ENCODE measurements at regions of chr11 and their contacts with region 1.

Region 1: GRCh38 chr11:59135648-59136461 is 6.8 kb upstream of the FAM111A start:
- DNase-seq: peak; percentile 92
- ATAC-seq: peak; percentile 99
- H3K4me3 Mint-ChIP-seq: peak overlapping the region; percentile 54
- H3K27ac Mint-ChIP-seq: peak overlapping the region; percentile 84
- H3K4me1 Mint-ChIP-seq: peaks cover 24% of the 10 kb centered on the region
- H3K27me3 Mint-ChIP-seq: no peaks in the 10 kb centered on the region

Region 2: DNA sequence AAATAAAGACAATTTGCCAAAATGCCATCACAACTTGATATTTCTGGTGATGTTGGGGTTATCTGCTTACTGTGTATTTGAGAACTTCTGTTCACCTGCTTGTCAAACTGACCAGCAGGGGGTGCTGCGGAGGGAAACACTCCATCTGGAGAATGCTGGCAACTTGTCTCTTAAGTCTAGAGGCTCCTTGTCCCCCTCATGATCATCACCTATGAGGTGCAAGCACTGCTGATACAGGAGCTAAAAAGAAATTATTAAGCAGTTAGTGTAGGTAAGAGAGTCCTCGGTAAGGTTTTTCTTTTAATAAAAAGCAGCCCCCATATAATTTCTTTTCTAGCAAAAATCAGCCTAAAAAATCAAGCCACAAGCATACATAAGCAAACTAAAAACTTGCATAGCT is 82.5 kb before region 1 on chr11:
- CTCF ChIA-PET with region 1: interaction called, 26 read pairs
- POLR2A ChIA-PET with region 1: interaction called, 3 read pairs
- DNase-seq: peak; percentile 85
- ATAC-seq: peak; percentile 76
- H3K4me3 Mint-ChIP-seq: no peak overlapping the region
- H3K27ac Mint-ChIP-seq: no peak overlapping the region
- H3K4me1 Mint-ChIP-seq: peaks cover 11% of the 10 kb centered on the region
- H3K27me3 Mint-ChIP-seq: peaks cover 14% of the 10 kb centered on the region

Region 3: DNA sequence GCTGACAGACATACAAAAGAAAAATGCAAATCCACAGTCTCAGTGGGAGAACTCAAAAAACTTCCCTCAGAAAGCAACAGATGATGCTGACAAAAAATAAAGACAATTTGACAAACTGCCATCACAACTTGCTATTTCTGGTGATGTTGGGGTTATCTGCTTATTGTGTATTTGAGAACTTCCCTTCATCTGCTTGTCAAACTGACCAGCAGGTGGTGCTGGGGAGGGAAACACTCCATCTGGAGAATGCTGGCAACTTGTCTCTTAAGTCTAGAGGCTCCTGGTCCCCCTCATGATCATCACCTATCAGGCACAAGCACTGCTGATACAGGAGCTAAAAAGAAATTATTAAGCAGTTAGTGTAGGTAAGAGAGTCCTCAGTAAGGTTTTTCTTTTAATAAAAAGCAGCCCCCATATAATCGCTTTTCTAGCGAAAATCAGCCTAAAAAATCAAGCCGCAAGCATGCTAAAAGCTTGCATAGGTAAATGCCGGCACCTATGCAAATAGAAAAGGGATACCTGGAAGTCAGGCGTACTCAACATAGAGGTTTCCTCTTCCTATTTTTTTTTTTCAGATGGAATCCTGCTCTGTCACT is 38.6 kb before region 1 on chr11:
- CTCF ChIA-PET with region 1: interaction called, 47 read pairs
- POLR2A ChIA-PET with region 1: no interaction called
- DNase-seq: peak; percentile 77
- ATAC-seq: peak; percentile 79
- H3K4me3 Mint-ChIP-seq: no peak overlapping the region
- H3K27ac Mint-ChIP-seq: no peak overlapping the region
- H3K4me1 Mint-ChIP-seq: peaks cover 15% of the 10 kb centered on the region
- H3K27me3 Mint-ChIP-seq: peaks cover 30% of the 10 kb centered on the region

Region 4: DNA sequence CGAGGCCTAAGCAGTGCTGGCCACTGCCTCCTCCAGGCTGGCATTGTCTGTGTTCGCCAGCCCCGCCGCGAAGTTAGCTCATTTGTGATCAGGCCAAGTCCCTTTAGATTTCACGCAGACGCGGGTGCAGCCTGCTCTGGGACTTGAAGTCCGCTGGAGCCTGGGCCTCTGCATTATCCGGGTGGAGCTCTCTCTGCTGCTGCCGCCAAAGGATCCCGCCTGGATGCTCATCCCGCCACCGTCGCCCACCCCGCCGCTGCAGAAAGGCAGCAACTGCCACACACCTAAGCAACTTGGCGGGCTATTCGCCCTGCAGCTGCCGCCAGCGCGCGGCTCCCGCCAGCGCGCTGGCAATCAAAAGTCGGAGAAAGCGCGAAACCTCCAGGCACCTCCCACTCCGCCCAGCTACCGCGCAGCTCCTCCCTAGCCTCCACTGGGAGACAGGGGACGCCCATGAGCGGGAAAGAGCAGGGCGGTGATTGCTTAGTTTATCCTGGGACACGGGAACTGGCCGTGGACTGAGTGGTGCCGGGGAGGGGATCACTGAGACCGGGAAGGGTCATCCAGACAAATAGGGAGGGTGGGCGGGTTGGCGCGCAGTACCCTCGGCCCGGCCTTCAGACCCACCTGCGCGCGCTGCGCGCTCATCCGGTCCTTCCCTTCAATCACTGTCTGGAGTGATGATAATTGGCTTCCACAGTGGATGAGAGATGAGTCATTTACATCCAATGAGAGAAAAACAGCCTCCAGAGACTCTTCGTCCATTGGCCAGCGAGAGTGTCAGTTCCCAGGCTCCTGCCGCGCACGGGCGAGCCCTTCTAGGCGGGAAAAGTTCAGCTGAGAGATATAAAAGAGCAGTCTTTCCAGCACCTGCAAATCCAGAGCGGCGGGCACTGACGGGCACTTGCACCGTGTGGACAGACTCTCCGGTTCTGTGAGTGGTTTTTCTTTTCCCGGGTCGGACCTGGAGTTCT is 29.2 kb before region 1 on chr11 and contains the start of gene FAM111B:
- CTCF ChIA-PET with region 1: interaction called, 44 read pairs
- POLR2A ChIA-PET with region 1: interaction called, 23 read pairs
- DNase-seq: peak; percentile 89
- ATAC-seq: peak; percentile 95
- H3K4me3 Mint-ChIP-seq: peak within 1 kb of the TSS; percentile 92
- H3K27ac Mint-ChIP-seq: peak within 1 kb of the TSS; percentile 86
- H3K4me1 Mint-ChIP-seq: peaks cover 70% of the 10 kb centered on the region
- H3K27me3 Mint-ChIP-seq: peaks cover 11% of the 10 kb centered on the region
- total RNA-seq, gene FAM111B: 66.2 to 69.0 TPM

Region 5: DNA sequence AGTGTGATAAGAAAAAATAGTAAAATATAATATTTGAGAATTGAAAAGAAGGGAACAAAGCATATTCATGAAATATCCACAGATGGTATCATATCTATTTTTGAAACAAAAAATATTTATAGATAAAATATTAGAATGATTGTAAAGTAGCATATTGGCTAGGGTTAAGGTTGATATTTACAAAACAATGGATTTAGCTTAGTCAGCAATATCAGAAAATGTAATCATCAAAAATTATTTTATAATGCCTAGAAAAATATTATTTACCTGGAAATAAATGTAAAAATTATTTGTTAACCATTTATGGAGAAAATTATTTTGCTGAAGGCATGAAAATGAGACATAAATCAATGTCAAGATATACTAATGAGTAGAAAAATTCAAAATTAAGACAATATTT is 16.0 kb before region 1 on chr11:
- CTCF ChIA-PET with region 1: interaction called, 13 read pairs
- POLR2A ChIA-PET with region 1: no interaction called
- DNase-seq: no peak
- ATAC-seq: no peak
- H3K4me3 Mint-ChIP-seq: no peak overlapping the region
- H3K27ac Mint-ChIP-seq: no peak overlapping the region
- H3K4me1 Mint-ChIP-seq: peaks cover 1% of the 10 kb centered on the region
- H3K27me3 Mint-ChIP-seq: no peaks in the 10 kb centered on the region

Region 6: DNA sequence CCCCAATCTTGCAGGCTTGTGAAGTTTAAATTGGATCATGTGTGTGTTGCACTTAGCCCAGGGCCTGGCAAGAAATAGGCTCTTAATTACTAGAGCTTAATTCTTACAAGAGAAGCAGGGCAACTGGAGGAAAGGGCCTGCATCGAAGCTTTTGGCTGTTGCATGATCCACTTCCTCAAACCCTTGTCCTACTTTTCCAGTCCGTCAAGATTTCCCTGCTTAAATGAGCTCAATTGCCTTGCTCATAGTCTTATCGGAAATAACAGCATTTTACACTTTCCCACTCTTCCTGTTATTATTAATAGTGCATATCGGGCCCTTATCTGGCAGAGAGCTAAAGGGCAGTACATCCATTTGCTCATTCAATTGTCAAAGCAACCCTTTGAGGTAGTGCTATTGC is 54.1 kb after region 1 on chr11:
- CTCF ChIA-PET with region 1: no interaction called
- POLR2A ChIA-PET with region 1: no interaction called
- DNase-seq: no peak
- ATAC-seq: no peak
- H3K4me3 Mint-ChIP-seq: no peak overlapping the region
- H3K27ac Mint-ChIP-seq: no peak overlapping the region
- H3K4me1 Mint-ChIP-seq: peaks cover 5% of the 10 kb centered on the region
- H3K27me3 Mint-ChIP-seq: peaks cover 4% of the 10 kb centered on the region